Activated naive CD4-positive, alpha-beta T cell treated with anti-CD3 and anti-CD28 coated beads for 36 hours (primary cell): ENCODE measurements at regions of chr3 and their contacts with region 1.

Region 1: GRCh38 chr3:101861212-101861788 is 12.0 kb downstream of the NFKBIZ start:
- DNase-seq: no peak
- H3K4me3 Mint-ChIP-seq: no peak overlapping the region
- H3K27ac Mint-ChIP-seq: peak overlapping the region; percentile 28
- H3K4me1 Mint-ChIP-seq: peaks cover 56% of the 10 kb centered on the region
- H3K27me3 Mint-ChIP-seq: no peaks in the 10 kb centered on the region

Region 2: GRCh38 chr3:101890716-101891115 is 29.4 kb after region 1 on chr3:
- CTCF ChIA-PET with region 1: no interaction called
- intact Hi-C with region 1: loop called (anchors 1 kb)
- DNase-seq: peak; percentile 43
- H3K4me3 Mint-ChIP-seq: no peak overlapping the region
- H3K27ac Mint-ChIP-seq: no peak overlapping the region
- H3K4me1 Mint-ChIP-seq: peaks cover 12% of the 10 kb centered on the region
- H3K27me3 Mint-ChIP-seq: no peaks in the 10 kb centered on the region